ENCODE measurements at regions of chr21 and their contacts with region 1.

Region 1: DNA sequence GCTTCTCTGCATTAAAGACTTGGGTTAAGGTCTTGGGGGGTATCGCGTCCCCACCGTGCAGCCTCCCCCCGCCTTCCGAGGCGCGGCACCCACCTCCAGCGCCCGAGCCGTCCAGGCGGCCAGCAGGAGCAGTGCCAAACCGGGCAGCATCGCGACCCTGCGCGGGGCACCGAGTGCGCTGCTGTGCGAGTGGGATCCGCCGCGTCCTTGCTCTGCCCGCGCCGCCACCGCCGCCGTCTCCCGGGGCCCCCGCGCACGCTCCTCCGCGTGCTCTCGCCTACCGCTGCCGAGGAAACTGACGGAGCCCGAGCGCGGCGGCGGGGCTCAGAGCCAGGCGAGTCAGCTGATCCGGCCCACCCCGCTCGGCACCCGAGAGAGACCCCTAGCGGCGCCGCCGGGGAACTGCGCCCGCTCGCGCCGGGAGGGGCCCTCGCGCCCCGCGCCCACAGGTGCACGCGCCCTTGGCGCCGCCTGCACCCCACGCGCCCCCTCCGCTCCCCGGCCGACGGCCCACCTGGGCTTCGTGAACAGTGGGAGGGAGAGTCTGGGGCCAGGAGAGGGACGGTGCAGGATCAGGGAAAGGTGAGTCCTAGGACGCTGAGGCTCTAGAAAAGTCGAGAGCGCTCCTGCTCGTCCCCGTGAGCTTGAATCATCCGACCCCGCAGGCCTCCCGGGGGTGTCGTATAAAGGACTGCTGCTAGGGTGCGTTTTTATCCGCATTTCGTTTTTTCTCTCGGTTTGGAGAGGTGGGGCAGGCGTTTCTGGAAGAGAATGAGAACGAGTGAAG is at the start of gene APP:
- DNase-seq: peak; percentile 19
- ATAC-seq: peak; percentile 77
- H3K4me3 ChIP-seq: peak within 1 kb of the TSS; percentile 81 to 89
- H3K27ac ChIP-seq: peak within 1 kb of the TSS; percentile 91
- H3K4me1 ChIP-seq: peaks cover 27 to 36% of the 10 kb centered on the region in 2 experiments
- H3K27me3 ChIP-seq: no peaks in the 10 kb centered on the region
- CTCF ChIP-seq: peak; percentile 14 to 76 (median 72); a peak in 4 of 6 replicates
- POLR2A ChIP-seq: peak; percentile 32
- RAD21 ChIP-seq: peak; percentile 53
- total RNA-seq, gene APP: 267 TPM

Region 2: GRCh38 chr21:25881525-25882376 is 288.9 kb before region 1 on chr21:
- CTCF ChIA-PET with region 1: interaction called, 3 read pairs
- POLR2A ChIA-PET with region 1: no interaction called
- RAD21 ChIA-PET with region 1: no interaction called
- intact Hi-C with region 1: loop called (anchors 1 kb)
- DNase-seq: peak; percentile 41
- ATAC-seq: peak; percentile 86
- H3K4me3 ChIP-seq: no peak overlapping the region
- H3K27ac ChIP-seq: no peak overlapping the region
- H3K4me1 ChIP-seq: no peaks in the 10 kb centered on the region
- H3K27me3 ChIP-seq: no peaks in the 10 kb centered on the region
- CTCF ChIP-seq: peak; percentile 55 to 97 (median 92); a peak in 5 of 6 replicates
- POLR2A ChIP-seq: no peak
- RAD21 ChIP-seq: peak; percentile 69

Region 3: GRCh38 chr21:25967573-25968438 is 202.9 kb before region 1 on chr21:
- CTCF ChIA-PET with region 1: no interaction called
- POLR2A ChIA-PET with region 1: no interaction called
- RAD21 ChIA-PET with region 1: no interaction called
- intact Hi-C with region 1: loop called (anchors 5 kb)
- DNase-seq: no peak
- ATAC-seq: no peak
- H3K4me3 ChIP-seq: no peak overlapping the region
- H3K27ac ChIP-seq: no peak overlapping the region
- H3K4me1 ChIP-seq: peaks cover 16 to 35% of the 10 kb centered on the region in 2 experiments
- H3K27me3 ChIP-seq: no peaks in the 10 kb centered on the region
- CTCF ChIP-seq: no peak
- POLR2A ChIP-seq: no peak
- RAD21 ChIP-seq: no peak

Measured in HCT116 (cell line).